Motor neuron (in vitro differentiated cells): ENCODE measurements at regions of chr21 and their contacts with region 1.

Region 1: GRCh38 chr21:31866077-31866511 is 6.7 kb upstream of the HUNK start:
- ATAC-seq: peak; percentile 93 to 100 (median 98)
- H3K4me3 ChIP-seq: no peak overlapping the region
- H3K27ac ChIP-seq: peak overlapping the region in 1 of 2 donors; percentile 19
- H3K4me1 ChIP-seq: peaks cover 3 to 5% of the 10 kb centered on the region in 2 donors

Region 2: DNA sequence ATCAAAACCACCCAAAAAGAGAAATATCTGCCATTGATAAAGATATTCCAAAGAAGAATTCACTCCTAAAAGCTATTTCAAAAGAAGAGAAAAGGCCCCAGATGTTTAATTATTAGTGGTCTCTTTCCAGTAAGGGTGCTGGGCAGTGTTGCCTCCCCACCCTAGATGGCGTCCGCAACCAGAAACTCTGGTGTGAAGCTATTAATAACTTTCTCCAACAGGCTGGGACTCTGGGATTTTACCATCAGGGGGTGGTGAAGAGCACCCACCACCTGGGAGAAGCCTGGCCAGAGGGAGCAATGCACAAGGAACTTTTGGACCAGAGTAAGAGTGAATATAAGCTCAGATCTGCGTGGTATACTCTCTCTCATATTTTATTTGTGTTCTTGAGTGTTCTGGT is 406.6 kb before region 1 on chr21:
- in situ Hi-C with region 1: no loop called
- ATAC-seq: peak in 1 of 8 experiments; percentile 71
- H3K4me3 ChIP-seq: no peak overlapping the region
- H3K27ac ChIP-seq: no peak overlapping the region
- H3K4me1 ChIP-seq: no peaks in the 10 kb centered on the region

Region 3: DNA sequence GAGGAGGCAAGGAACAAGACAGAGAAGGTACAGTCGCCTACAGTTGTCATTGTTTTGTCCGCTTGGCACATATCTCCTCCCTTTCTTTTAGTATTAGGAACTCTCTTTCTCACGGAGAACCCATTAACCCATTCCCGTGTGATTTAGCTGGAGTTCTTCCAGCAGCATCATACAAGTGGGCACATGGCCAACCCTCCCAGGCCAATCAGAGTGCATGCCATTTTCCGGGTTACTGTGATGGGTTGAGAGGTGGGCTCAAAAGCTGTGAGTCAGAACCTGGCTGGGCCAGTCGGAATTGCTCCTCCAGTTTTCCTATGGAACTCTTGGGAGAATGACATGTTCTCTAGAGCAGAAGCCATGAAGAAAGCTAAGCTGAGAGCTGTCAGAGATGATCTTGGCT is 289.7 kb before region 1 on chr21:
- in situ Hi-C with region 1: no loop called
- ATAC-seq: no peak
- H3K4me3 ChIP-seq: no peak overlapping the region
- H3K27ac ChIP-seq: no peak overlapping the region
- H3K4me1 ChIP-seq: peaks cover 0 to 4% of the 10 kb centered on the region in 2 donors

Region 4: DNA sequence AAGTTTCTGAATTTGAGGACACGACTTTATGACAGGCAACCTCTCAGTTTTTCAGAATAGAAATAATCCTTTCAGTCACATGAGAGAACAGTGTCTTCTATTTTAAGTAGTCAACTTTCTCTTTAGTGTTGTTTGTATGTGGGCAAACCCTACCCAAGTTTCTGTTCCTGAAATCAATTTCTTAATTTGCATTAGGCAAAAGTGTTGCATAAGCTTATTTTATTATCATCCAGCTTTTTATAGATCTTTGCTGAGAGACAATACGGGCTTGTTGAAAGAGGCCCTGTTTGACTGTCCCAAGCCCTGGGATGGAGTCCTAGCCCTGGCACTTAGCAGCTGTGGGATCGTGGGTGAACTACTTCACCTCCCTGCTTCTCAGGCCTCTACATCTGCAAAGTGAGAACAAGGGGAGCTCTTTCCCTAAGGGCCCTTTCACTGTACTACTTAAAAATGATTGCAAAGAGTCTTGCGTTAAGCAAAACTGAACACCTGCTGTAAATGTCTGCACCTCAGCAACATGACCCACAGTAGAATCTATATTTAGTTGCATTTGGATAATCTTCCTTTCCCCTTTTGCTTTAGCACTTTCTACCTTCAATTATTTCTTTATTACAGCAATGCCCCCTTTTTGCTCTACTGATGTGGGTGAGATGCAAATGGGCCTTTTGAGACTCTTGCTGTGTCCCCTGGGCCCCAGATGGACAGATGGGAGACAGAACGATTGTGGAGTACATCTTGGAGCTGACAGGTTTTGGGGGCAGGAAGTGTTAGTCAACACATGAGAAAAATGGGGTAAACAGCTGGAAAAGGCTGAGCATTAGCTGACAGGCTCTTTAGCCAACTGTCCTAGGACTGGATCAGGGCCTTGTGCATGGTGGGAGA is 93.2 kb before region 1 on chr21:
- in situ Hi-C with region 1: loop called in 1 of 9 experiments (anchors 25 kb)
- ATAC-seq: no peak
- H3K4me3 ChIP-seq: no peak overlapping the region
- H3K27ac ChIP-seq: no peak overlapping the region
- H3K4me1 ChIP-seq: no peaks in the 10 kb centered on the region

Region 5: DNA sequence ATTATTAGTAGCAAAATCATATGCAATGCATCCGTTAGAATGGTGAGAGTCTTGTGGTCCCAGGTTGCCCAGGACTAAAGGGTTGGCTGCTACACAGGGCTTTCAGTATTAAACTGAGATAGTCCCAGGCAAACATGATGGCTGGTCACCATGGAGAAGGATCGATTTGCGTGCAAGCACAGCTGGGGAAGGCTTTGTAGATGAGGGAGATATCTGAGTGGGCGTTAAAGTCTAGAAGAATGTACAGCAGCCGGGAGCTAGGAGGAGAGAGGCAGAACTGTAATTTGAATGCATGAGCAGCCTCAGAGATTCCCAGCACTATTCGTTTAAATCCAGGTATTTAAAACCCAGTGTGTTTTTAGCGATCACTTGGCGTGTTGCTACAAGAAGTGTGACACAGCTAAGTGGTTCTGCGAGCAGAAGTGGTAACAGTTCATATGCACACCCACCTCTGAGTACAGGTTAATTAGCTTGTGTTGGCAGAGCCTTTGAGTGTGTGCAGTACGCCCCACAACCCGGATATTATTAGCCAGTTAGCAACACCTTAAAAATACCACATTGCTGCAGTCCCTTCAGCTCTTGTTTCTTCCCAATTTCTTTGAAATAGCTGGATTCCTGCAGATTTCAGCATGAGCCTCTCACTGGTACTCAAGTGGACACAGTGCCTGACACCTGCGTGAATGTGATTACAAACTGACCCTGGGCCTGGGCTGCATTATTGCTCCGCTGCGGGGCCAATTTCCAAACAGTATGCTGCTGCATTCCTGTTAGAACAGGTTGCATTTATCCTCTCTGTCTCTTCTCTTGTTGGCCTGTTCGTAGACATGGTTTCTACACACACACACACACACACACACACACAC is 67.0 kb before region 1 on chr21:
- in situ Hi-C with region 1: loop called in 1 of 9 experiments (anchors 10 kb)
- ATAC-seq: peak; percentile 12 to 61 (median 54)
- H3K4me3 ChIP-seq: no peak overlapping the region
- H3K27ac ChIP-seq: peak overlapping the region in 1 of 2 donors; percentile 15
- H3K4me1 ChIP-seq: peaks cover 34 to 45% of the 10 kb centered on the region in 2 donors

Region 6: DNA sequence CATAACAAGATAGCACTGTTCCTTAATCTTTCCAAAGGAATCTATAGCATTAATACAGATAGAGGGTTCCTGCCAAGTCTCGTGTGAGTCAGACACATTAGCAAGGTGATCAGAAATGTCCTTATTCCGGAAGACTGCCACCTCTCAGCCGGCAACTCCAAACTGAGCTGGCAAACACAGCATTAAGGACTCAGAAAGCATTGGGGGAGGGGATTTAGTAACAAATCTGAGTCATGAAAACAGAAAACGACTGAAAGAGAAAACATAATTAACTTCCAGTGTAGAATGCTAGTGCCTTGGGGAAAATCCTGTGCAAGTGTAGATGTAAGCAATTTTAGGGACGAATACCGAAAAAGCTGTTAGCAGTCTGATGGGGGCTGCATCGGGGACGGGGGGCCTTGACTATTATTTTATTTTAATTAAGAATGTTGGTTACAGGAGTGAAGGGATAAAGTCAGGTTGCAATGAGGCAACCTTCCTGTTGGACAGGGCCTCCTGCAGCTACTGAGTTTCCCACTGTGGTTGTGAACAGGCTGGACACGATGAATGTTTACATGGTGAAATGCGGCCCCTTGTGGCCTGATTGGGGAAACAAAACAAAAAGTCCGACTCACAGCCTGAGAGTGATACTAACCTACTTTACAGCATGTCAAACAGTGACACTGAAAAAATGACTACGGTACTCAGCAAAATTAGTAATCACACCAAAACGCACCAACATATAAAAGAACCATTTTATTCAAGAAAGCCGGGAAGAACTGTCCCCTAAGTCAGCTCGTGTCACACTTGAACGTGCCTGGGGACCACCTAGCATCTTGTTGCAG is 392.1 kb after region 1 on chr21:
- in situ Hi-C with region 1: loop called in 6 of 9 experiments (anchors 25 kb)
- ATAC-seq: peak; percentile 62 to 92 (median 70)
- H3K4me3 ChIP-seq: no peak overlapping the region
- H3K27ac ChIP-seq: no peak overlapping the region
- H3K4me1 ChIP-seq: peaks cover 17 to 18% of the 10 kb centered on the region in 2 donors